Mammary epithelial cell (primary cell): ENCODE measurements at regions of chr13 and their contacts with region 1.

Region 1: GRCh38 chr13:47484548-47484947 is 516.5 kb downstream of the SUCLA2 start:
- DNase-seq: peak; percentile 71
- H3K4me3 ChIP-seq: no peak overlapping the region
- H3K27ac ChIP-seq: no peak overlapping the region
- H3K4me1 ChIP-seq: peaks cover 19% of the 10 kb centered on the region
- H3K27me3 ChIP-seq: no peaks in the 10 kb centered on the region
- CTCF ChIP-seq: no peak

Region 2: GRCh38 chr13:47521890-47522487 is 37.4 kb after region 1 on chr13:
- CTCF ChIA-PET with region 1: no interaction called
- dilution Hi-C with region 1: loop called (anchors 5 kb)
- in situ Hi-C with region 1: no loop called
- intact Hi-C with region 1: no loop called
- DNase-seq: no peak
- H3K4me3 ChIP-seq: no peak overlapping the region
- H3K27ac ChIP-seq: no peak overlapping the region
- H3K4me1 ChIP-seq: no peaks in the 10 kb centered on the region
- H3K27me3 ChIP-seq: no peaks in the 10 kb centered on the region
- CTCF ChIP-seq: no peak